GM12878 (cell line): ENCODE measurements at regions of chrX and their contacts with region 1.

Region 1: DNA sequence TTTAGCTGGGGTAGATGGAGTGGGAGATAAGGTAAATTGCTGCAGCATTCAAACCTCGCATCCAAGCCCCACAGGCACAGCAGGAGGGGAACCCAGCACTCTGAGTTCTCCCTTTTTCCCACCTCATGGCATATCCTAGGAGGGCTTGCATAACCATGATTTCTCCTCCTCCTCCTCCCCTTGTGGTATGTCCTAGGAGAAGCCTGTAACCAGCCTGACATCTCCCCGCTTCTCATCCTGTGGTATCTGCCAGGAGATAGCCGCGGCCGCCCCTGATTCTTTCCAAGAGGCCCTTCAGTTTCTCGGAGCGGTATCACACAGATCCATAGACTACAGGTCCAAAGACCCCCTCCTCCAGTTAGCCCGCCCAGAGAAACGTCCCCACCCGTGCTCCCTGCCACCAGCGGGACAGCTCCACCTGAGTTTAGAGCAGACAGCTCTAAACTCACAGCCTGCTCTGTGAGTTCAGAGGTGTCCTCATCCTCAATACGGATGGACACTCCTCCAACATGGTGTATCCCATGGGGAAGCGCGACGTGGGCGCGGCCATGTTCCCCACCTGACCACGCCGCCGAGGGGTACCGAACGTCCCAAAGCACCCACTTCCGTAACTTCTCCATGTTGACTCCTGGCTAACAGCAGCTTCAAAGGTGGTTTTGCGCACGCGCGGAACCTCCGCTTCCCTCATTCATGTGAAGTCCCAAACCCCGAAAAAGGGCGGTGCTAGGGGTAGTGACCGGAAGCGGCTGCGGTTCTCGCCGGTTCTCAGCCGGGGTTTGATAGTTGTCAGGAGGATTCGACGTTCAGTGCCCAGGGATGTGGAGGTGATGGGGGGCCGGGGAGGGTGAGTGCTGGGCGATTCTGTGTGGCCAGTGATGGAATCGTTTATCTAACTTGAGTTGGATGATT is at the start of gene ZNF81:
- DNase-seq: peak; percentile 91
- ATAC-seq: peak; percentile 97
- H3K4me3 ChIP-seq: peak within 1 kb of the TSS; percentile 66
- H3K27ac ChIP-seq: peak within 1 kb of the TSS; percentile 50
- H3K4me1 ChIP-seq: no peaks in the 10 kb centered on the region
- H3K27me3 ChIP-seq: no peaks in the 10 kb centered on the region
- CTCF ChIP-seq: no peak
- EP300 ChIP-seq: no peak
- POLR2A ChIP-seq: peak; percentile 85
- RAD21 ChIP-seq: no peak
- polyA plus RNA-seq, gene ZNF81: 3.4 to 4.3 TPM

Region 2: DNA sequence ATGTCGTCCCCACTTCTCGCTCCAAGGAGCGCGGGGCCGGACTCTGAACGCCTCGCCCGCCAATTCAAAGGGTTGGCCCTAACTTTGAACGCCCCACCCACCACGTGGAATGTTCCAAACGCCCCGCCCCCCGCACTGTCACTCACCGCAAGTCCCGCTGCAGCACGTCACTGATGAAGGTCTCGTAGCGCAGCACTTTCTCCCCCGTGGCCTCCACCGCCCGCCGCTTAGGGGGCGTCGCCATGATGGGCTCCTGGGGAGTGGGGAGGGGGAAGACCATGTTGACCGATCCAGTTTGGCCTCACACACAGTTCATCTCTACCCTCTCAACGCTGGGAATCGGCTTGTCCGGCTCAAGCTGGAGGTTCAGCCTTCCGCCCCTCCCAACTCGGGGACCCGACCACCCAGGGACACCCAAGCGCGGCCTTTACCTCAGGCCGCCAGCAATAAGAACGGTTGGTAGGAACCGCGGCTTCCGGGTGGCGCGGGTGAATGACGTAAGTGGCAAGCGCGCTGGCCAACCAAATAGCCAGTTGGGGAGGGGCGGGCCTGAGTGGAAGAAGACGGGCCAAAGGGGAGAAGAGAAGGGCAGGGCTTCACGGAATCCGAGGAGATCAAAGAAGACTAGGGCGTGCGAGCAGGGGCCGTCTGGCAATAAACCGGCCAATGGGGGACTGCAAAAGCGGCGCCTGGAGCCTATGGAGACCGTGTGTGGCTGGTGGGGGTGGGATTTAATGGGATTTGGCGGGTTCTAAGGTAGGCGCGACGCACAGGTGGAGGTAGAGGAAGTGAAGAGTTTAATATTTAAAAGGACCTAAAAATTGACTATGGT is 177.5 kb before region 1 on chrX and contains the start of gene UXT:
- CTCF ChIA-PET with region 1: no interaction called
- POLR2A ChIA-PET with region 1: no interaction called
- RAD21 ChIA-PET with region 1: no interaction called
- SMC1A ChIA-PET with region 1: no interaction called
- in situ Hi-C with region 1: no loop called
- intact Hi-C with region 1: loop called (anchors 5 kb)
- DNase-seq: peak; percentile 74
- ATAC-seq: peak; percentile 96
- H3K4me3 ChIP-seq: peak within 1 kb of the TSS; percentile 70
- H3K27ac ChIP-seq: peak within 1 kb of the TSS; percentile 86
- H3K4me1 ChIP-seq: no peaks in the 10 kb centered on the region
- H3K27me3 ChIP-seq: no peaks in the 10 kb centered on the region
- CTCF ChIP-seq: no peak
- EP300 ChIP-seq: 0 out of 4 replicates have a peak, but pooled peaks of 1 of the 2 experiments have one; percentile 9
- POLR2A ChIP-seq: peak; percentile 94; the same call in 1 of the 2 replicates
- RAD21 ChIP-seq: no peak
- polyA plus RNA-seq, gene UXT: 105 to 204 TPM

Region 3: GRCh38 chrX:47817421-47817820 is 19.0 kb before region 1 on chrX:
- CTCF ChIA-PET with region 1: interaction called, 11 read pairs
- POLR2A ChIA-PET with region 1: interaction called, 5 read pairs
- RAD21 ChIA-PET with region 1: interaction called, 4 read pairs
- SMC1A ChIA-PET with region 1: interaction called, 4 read pairs
- in situ Hi-C with region 1: no loop called
- intact Hi-C with region 1: no loop called
- DNase-seq: no peak
- ATAC-seq: no peak
- H3K4me3 ChIP-seq: no peak overlapping the region
- H3K27ac ChIP-seq: no peak overlapping the region
- H3K4me1 ChIP-seq: no peaks in the 10 kb centered on the region
- H3K27me3 ChIP-seq: no peaks in the 10 kb centered on the region
- CTCF ChIP-seq: no peak
- EP300 ChIP-seq: no peak
- POLR2A ChIP-seq: no peak
- RAD21 ChIP-seq: no peak

Region 4: GRCh38 chrX:48107717-48108116 is 271.3 kb after region 1 on chrX:
- CTCF ChIA-PET with region 1: no interaction called
- POLR2A ChIA-PET with region 1: no interaction called
- RAD21 ChIA-PET with region 1: no interaction called
- SMC1A ChIA-PET with region 1: no interaction called
- in situ Hi-C with region 1: no loop called
- intact Hi-C with region 1: no loop called
- DNase-seq: no peak
- ATAC-seq: no peak
- H3K4me3 ChIP-seq: no peak overlapping the region
- H3K27ac ChIP-seq: no peak overlapping the region
- H3K4me1 ChIP-seq: no peaks in the 10 kb centered on the region
- H3K27me3 ChIP-seq: no peaks in the 10 kb centered on the region
- CTCF ChIP-seq: no peak
- EP300 ChIP-seq: no peak
- POLR2A ChIP-seq: no peak
- RAD21 ChIP-seq: no peak